ENCODE measurements at regions of chr20 and their contacts with region 1.

Region 1: GRCh38 chr20:1313236-1313964 is 15.5 kb downstream of the SDCBP2 start:
- DNase-seq: peak in 1 of 2 donors; percentile 72
- H3K4me3 ChIP-seq: peak overlapping the region in 2 of 3 donors; percentile 15 to 57
- H3K27ac ChIP-seq: no peak overlapping the region
- H3K4me1 ChIP-seq: peaks cover 3 to 6% of the 10 kb centered on the region in 2 donors
- H3K27me3 ChIP-seq: no peaks in the 10 kb centered on the region
- CTCF ChIP-seq: peak; percentile 88 to 95 (median 95)
- POLR2A ChIP-seq: no peak

Region 2: DNA sequence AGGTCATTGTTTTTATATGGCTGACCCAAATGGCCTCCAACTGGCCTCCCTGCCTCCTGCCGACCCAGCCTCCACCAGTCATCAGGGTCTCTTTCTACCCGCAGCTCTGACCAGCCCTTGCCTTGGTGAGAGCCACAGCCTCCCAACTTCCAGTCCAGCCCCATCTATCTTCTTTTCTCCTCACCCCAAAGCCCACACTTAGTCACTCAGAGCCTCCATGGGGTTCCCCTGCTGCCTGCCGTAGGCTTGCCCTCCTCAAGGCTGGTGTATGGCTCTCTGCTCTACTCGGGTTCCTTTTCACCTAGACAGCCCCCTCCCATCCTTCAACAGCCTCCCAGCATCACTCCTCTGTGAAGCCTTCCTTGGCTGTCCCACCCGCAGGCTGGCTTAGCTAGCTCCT is 721.5 kb before region 1 on chr20:
- intact Hi-C with region 1: loop called (anchors 5 kb)
- DNase-seq: peak in 1 of 2 donors; percentile 17
- H3K4me3 ChIP-seq: no peak overlapping the region
- H3K27ac ChIP-seq: no peak overlapping the region
- H3K4me1 ChIP-seq: no peaks in the 10 kb centered on the region
- H3K27me3 ChIP-seq: peaks cover 0 to 4% of the 10 kb centered on the region in 2 donors
- CTCF ChIP-seq: no peak
- POLR2A ChIP-seq: no peak

Region 3: DNA sequence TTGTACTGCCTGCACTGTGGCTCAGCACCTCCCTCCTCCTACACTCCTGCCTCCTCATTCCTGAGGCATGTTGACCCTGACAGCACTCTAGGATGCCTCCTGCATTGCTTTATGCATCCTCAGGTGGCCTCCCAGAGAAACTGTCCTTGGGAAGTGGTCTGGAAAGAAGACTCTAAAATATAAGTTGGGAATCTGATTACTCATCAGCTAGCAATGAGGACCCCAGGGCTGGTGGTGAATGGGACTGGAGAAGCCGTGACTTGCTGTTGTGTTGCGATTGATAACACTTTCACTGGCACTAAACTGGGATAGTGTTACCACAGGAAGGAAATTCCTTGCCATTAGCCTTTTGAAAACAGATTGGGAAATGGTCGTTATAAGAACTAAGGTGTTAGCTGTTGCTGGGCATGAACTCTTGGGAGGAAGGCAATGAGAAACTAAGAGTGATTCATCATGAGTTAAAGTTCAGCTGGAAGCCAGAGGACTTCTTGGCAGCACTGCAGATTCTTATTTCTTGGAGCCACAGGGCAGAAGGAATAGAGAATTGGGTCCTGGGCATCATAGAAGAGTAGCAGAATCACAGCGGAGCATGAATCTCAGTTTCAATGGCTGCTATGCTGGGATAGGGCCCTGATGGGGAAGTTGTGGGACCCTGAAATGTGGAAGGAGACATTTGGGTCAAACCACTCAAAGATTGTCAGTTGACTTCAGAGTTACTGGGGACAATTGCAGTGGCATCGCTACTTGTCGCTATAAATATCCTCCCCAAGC is 254.2 kb after region 1 on chr20:
- intact Hi-C with region 1: no loop called
- DNase-seq: no peak
- H3K4me3 ChIP-seq: no peak overlapping the region
- H3K27ac ChIP-seq: no peak overlapping the region
- H3K4me1 ChIP-seq: no peaks in the 10 kb centered on the region
- H3K27me3 ChIP-seq: no peaks in the 10 kb centered on the region
- CTCF ChIP-seq: no peak
- POLR2A ChIP-seq: no peak

Measured in breast epithelium (tissue), 4 donors.